ENCODE measurements at regions of chrX and their contacts with region 1.

Region 1: DNA sequence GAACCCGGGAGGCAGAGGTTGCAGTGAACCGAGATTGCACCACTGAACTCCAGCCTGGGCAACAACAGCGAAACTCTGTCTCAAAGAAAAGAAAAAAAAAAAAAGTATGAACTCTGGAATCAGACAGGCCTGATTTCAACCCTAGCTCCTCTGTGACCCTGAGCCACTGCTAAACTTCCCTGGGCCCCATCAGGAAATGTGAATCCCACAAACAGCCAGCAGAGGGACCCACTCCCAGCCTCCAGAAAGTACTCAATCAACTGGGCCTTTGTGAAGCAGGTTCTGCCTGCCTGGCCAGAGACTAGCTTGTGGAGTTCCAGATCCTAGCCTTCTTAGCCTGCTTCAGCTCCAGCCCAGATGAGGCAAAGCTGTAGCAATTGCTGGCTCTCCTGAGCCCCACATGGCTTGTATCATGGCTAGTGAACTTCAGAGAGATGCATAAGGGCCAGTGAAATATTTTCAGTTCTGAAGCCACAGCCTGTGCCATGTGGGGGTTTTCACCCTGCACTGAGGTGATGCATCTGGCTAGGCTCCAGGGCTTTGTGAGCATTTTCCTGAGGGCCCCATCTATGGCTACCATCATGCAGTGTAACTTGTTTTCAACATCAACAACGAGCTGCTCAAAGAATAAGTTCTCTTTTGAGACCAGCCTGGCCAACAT is 7.2 kb upstream of the IDS start:
- DNase-seq: peak; percentile 66
- H3K4me3 Mint-ChIP-seq: no peak overlapping the region
- H3K27ac Mint-ChIP-seq: no peak overlapping the region
- H3K4me1 Mint-ChIP-seq: peaks cover 19% of the 10 kb centered on the region
- H3K27me3 Mint-ChIP-seq: peaks cover 2% of the 10 kb centered on the region

Region 2: GRCh38 chrX:149255860-149256259 is 256.5 kb before region 1 on chrX:
- CTCF ChIA-PET with region 1: no interaction called
- intact Hi-C with region 1: no loop called
- DNase-seq: no peak
- H3K4me3 Mint-ChIP-seq: no peak overlapping the region
- H3K27ac Mint-ChIP-seq: no peak overlapping the region
- H3K4me1 Mint-ChIP-seq: no peaks in the 10 kb centered on the region
- H3K27me3 Mint-ChIP-seq: peaks cover 5% of the 10 kb centered on the region

Region 3: DNA sequence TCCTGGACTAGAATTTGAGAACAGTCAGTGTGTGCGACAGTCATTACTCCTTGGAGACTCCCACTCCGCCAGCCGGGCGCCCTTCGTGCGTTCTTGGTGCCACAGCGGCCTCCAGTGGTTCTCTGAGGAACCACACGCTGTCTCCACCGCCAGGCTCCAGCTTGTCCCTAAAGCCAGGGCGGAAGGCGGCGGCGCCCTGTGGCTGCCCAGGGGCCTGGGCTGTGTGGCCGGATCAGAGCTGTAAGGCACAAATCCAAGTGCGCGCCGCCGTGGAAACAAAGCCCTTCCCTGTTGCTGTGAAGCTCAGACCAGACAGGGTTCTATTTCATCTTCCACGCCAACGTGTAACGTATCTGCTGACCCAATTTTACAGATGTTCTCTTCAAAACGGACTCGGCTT is 41.4 kb before region 1 on chrX:
- CTCF ChIA-PET with region 1: no interaction called
- intact Hi-C with region 1: no loop called
- DNase-seq: peak; percentile 67
- H3K4me3 Mint-ChIP-seq: no peak overlapping the region
- H3K27ac Mint-ChIP-seq: no peak overlapping the region
- H3K4me1 Mint-ChIP-seq: no peaks in the 10 kb centered on the region
- H3K27me3 Mint-ChIP-seq: no peaks in the 10 kb centered on the region

Region 4: GRCh38 chrX:149830192-149830873 is 318.0 kb after region 1 on chrX:
- CTCF ChIA-PET with region 1: no interaction called
- intact Hi-C with region 1: loop called (anchors 1 kb)
- DNase-seq: peak; percentile 15
- H3K4me3 Mint-ChIP-seq: peak overlapping the region; percentile 54
- H3K27ac Mint-ChIP-seq: peak overlapping the region; percentile 80
- H3K4me1 Mint-ChIP-seq: peaks cover 29% of the 10 kb centered on the region
- H3K27me3 Mint-ChIP-seq: peaks cover 3% of the 10 kb centered on the region

Region 5: DNA sequence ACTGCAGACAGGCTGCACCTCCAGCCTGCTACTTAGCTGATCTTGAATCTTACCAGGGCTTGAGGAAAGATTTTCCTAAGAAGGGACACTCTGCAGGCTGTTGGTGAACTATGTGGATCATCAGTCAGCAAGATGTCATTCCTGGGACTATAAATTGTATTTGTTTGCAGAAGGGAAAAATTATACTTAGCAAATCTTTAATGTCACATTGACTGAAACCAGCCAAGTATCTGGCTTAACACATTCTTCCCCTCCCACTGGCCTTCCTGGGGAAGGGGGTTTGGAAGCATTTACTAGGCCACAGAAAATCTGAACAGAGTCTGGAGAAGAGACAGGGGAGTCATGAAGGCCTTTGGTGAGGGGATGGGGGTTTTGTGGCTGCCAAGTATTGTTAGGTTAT is 582.6 kb after region 1 on chrX:
- CTCF ChIA-PET with region 1: no interaction called
- intact Hi-C with region 1: no loop called
- DNase-seq: no peak
- H3K4me3 Mint-ChIP-seq: no peak overlapping the region
- H3K27ac Mint-ChIP-seq: no peak overlapping the region
- H3K4me1 Mint-ChIP-seq: no peaks in the 10 kb centered on the region
- H3K27me3 Mint-ChIP-seq: no peaks in the 10 kb centered on the region

Region 6: DNA sequence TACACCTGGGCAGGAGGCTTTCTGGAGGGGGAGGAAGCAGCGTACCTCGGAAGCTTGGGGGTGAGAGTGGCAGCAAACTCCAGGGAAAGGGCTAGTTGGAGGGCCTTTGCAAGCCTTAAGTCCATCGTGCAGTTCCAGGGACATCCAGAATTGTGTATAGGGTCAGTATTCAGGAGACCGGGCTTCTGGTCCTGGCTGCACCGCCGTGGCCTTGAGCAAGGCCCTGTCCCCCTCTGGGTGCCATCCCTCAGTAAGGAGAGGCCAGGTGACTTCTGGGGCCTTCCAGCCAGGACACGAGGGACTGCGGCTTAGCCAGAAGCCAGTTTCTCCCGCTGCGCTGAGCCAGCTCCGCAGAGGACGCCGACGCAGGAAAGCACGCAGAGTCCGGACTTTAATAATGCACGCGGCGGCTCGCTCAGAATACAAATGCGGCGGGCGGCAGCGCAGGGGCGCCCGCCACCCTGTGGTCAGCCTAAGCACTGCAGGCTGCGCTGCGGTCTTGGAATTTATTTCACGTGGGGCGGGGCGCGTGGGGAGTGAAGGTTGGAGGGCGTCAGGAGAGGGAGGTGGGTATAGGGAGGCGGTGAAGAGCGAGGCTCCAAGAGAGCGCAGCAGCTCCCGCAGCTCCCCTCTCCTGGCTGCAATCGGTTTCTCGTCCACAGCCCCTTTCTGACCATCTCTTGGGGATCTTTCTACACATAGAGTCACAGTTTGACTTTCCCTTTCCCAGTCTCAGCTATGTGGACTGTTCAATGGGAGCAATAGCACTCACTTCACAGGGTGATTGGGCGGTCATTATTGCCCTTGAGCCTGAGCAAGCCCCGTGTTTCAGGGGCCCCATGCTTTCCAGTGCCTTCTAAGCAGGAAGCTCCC is 1570.0 kb after region 1 on chrX:
- CTCF ChIA-PET with region 1: no interaction called
- intact Hi-C with region 1: loop called (anchors 10 kb)
- DNase-seq: peak; percentile 61
- H3K4me3 Mint-ChIP-seq: no peak overlapping the region
- H3K27ac Mint-ChIP-seq: no peak overlapping the region
- H3K4me1 Mint-ChIP-seq: peaks cover 2% of the 10 kb centered on the region
- H3K27me3 Mint-ChIP-seq: peaks cover 3% of the 10 kb centered on the region

Measured in activated naive CD4-positive, alpha-beta T cell treated with anti-CD3 and anti-CD28 coated beads for 36 hours (primary cell).